Ovary (tissue), 10 donors: ENCODE measurements at regions of chr5 and their contacts with region 1.

Region 1: DNA sequence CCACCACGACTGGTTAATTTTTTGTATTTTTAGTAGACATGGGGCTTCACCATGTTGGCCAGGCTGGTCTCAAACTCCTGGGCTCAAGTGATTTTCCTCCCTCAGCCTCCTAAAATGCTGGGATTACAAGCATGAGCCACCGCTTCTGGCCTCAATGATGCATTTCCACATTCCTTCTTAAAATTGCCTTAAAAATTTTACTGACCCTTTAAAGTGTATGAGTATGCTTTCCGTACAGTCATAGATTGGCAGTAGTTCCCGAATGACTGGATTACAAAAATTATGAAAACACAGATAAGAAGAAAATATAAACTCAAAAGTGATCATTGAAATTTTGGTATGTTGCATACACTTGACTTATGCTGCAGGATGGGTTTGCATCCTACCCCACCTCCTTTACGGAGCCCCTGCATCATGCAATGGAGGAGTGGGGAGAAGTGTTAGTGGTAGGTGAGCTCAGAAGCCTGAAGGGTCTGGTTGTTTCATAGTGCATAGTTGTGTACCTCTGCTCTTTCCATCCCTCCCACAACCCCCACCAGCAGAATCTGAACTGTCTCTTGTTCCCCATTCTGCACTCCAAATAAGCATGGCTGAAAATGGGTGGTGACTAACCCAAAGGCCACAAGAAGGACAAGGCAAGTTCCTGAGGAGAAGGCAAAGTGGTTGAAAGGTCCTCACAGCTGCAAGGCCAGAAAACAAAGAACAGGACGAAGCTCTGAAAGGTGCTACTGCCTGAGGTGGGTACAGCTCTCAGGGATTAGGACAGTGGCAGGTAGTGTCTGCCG is 26.8 kb downstream of the ANKRD55 start:
- DNase-seq: no peak
- H3K4me3 ChIP-seq: no peak overlapping the region
- H3K27ac ChIP-seq: no peak overlapping the region
- H3K4me1 ChIP-seq: no peaks in the 10 kb centered on the region
- H3K27me3 ChIP-seq: no peaks in the 10 kb centered on the region
- CTCF ChIP-seq: no peak
- EP300 ChIP-seq: no peak
- POLR2A ChIP-seq: no peak

Region 2: GRCh38 chr5:55936100-55936693 is 270.1 kb before region 1 on chr5:
- intact Hi-C with region 1: loop called (anchors 5 to 10 kb)
- DNase-seq: peak; percentile 78 to 89 (median 86)
- H3K4me3 ChIP-seq: no peak overlapping the region
- H3K27ac ChIP-seq: no peak overlapping the region
- H3K4me1 ChIP-seq: no peaks in the 10 kb centered on the region
- H3K27me3 ChIP-seq: no peaks in the 10 kb centered on the region
- CTCF ChIP-seq: peak; percentile 54 to 80 (median 69)
- EP300 ChIP-seq: no peak
- POLR2A ChIP-seq: no peak

Region 3: GRCh38 chr5:56012281-56012963 is 193.9 kb before region 1 on chr5:
- intact Hi-C with region 1: no loop called
- DNase-seq: peak in 1 of 5 donors; percentile 18
- H3K4me3 ChIP-seq: no peak overlapping the region
- H3K27ac ChIP-seq: no peak overlapping the region
- H3K4me1 ChIP-seq: peaks cover 3% of the 10 kb centered on the region
- H3K27me3 ChIP-seq: no peaks in the 10 kb centered on the region
- CTCF ChIP-seq: no peak
- EP300 ChIP-seq: no peak
- POLR2A ChIP-seq: no peak